Breast epithelium (tissue), 4 donors: ENCODE measurements at regions of chr1 and their contacts with region 1.

Region 1: GRCh38 chr1:65979136-65980044 is 186.7 kb downstream of the PDE4B start:
- DNase-seq: no peak
- H3K4me3 ChIP-seq: no peak overlapping the region
- H3K27ac ChIP-seq: peak overlapping the region in 1 of 2 donors; percentile 19
- H3K4me1 ChIP-seq: no peaks in the 10 kb centered on the region
- H3K27me3 ChIP-seq: no peaks in the 10 kb centered on the region
- CTCF ChIP-seq: no peak
- POLR2A ChIP-seq: no peak

Region 2: GRCh38 chr1:65278376-65279069 is 700.9 kb before region 1 on chr1:
- intact Hi-C with region 1: no loop called
- DNase-seq: no peak
- H3K4me3 ChIP-seq: no peak overlapping the region
- H3K27ac ChIP-seq: no peak overlapping the region
- H3K4me1 ChIP-seq: no peaks in the 10 kb centered on the region
- H3K27me3 ChIP-seq: no peaks in the 10 kb centered on the region
- CTCF ChIP-seq: no peak
- POLR2A ChIP-seq: no peak

Region 3: GRCh38 chr1:65894738-65895605 is 84.4 kb before region 1 on chr1:
- intact Hi-C with region 1: no loop called
- DNase-seq: no peak
- H3K4me3 ChIP-seq: no peak overlapping the region
- H3K27ac ChIP-seq: no peak overlapping the region
- H3K4me1 ChIP-seq: no peaks in the 10 kb centered on the region
- H3K27me3 ChIP-seq: no peaks in the 10 kb centered on the region
- CTCF ChIP-seq: no peak
- POLR2A ChIP-seq: no peak

Region 4: DNA sequence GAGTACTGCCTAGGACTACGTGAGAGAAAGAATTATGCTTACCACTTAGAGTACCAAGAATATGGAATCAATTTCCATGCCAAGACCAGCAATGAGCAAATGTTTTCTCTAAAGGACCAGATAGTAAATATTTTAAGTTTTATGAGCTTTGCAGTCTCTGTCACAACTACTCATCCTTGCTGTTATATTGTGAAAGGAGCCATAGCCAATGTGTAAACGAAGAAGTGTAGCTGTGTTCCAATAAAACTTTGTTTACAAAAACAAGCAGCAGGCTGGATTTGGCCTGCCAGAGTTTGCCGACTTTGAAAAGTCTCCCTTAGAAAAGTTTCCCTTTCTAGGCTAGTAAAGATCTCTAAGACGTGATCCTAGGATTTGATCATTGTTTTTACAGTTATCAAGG is 57.9 kb before region 1 on chr1:
- intact Hi-C with region 1: no loop called
- DNase-seq: no peak
- H3K4me3 ChIP-seq: no peak overlapping the region
- H3K27ac ChIP-seq: no peak overlapping the region
- H3K4me1 ChIP-seq: no peaks in the 10 kb centered on the region
- H3K27me3 ChIP-seq: no peaks in the 10 kb centered on the region
- CTCF ChIP-seq: no peak
- POLR2A ChIP-seq: no peak

Region 5: DNA sequence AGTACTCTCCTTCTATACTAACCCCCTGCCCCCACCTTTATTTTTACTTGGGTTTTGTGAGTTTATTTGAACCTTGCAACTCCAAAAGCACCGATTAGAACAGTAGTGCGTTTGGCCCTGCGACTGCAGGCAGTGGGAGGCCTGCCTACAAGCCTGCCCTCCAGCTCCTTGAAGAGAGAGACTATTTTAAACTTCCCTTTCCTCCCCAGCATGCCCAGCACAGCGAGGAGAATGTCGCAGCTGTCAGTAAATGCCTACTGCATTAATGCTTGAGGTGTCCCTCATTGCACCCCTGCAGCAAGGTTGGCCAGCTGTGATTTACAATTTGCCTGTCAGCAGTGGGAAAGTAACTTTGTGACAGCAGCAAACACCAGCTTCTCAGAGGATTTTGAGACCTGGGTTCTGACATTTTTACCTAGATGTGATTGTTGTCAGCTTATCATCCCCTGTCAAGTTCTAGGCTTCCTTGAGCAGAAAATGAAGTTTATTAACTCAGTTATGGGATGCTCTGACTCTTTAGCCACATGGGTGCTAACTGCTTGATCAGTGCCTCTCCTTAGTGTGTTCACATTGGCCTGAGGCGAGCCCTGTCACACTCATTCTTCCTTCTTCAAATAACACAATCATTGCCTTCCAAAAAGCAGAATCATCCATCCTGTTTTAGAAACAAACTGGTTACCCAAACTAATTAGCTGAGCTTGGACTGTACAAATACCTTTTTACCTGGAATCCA is 16.1 kb before region 1 on chr1:
- intact Hi-C with region 1: no loop called
- DNase-seq: no peak
- H3K4me3 ChIP-seq: peak overlapping the region in 2 of 3 donors; percentile 1 to 23
- H3K27ac ChIP-seq: peak overlapping the region; percentile 65 to 71
- H3K4me1 ChIP-seq: peaks cover 0 to 5% of the 10 kb centered on the region in 2 donors
- H3K27me3 ChIP-seq: no peaks in the 10 kb centered on the region
- CTCF ChIP-seq: no peak
- POLR2A ChIP-seq: no peak

Region 6: GRCh38 chr1:66618390-66618789 is 639.0 kb after region 1 on chr1:
- intact Hi-C with region 1: loop called (anchors 10 kb)
- DNase-seq: no peak
- H3K4me3 ChIP-seq: no peak overlapping the region
- H3K27ac ChIP-seq: no peak overlapping the region
- H3K4me1 ChIP-seq: no peaks in the 10 kb centered on the region
- H3K27me3 ChIP-seq: no peaks in the 10 kb centered on the region
- CTCF ChIP-seq: no peak
- POLR2A ChIP-seq: no peak